Sciatic nerve (tissue), 2 donors: ENCODE measurements at regions of chr5 and their contacts with region 1.

Region 1: DNA sequence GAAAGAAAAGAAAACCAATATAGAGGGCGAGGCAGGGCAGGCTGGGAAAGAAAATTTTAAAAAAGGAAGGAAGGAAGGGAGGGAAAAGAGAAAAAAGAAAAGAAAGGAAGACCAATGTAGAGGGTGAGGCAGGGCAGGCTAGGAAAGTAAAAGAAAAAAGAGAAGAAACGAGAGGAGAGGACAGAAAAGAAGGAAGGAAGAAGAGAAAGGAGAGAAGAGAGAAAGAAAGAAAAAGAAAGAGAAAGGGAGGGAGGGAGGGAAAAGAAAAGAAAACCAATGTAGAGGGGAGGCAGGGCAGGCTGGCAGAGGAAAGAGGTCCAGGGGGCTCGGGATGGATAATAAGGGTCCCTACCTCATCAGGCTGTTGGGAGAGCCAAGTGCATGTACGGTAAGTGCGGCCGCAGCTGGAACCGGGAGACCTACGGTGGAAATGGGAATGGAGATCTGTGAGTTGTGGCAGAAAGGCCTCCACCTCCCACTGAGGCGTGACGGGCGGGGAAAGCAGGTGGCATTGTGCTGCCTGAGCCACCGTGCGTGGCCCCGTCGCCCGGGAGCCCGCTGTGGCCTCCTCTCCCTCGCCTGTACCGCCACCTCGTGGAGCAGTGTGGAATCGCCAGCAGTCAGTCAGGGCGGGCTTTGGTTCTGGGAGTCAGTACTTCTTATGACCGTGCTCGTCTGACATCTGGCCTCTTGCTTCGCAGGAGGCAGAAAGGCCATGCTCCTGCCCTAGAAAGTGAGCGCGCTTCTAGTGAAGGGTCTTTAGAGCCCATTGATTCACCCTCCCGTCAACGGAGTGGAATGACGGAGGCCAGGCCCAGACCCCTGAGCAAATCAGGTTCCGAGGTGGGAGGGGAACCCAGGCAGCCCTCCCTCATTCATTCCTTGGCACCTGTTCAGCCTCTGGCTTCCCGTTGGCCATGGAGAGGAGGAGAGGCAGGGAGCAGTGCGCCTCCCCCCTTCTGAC is 10.4 kb upstream of the NHP2 start:
- DNase-seq: peak; percentile 92
- ATAC-seq: peak; percentile 95

Region 2: GRCh38 chr5:178075840-178076548 is 88.1 kb before region 1 on chr5:
- intact Hi-C with region 1: loop called (anchors 5 kb)
- DNase-seq: peak; percentile 83
- ATAC-seq: peak; percentile 90

Region 3: GRCh38 chr5:178232124-178232919 is 68.3 kb after region 1 on chr5 and contains the start of gene PHYKPL:
- intact Hi-C with region 1: no loop called
- DNase-seq: peak; percentile 81
- ATAC-seq: peak; percentile 71
- total RNA-seq, gene PHYKPL: 133 TPM

Region 4: GRCh38 chr5:178818094-178818493 is 654.0 kb after region 1 on chr5:
- intact Hi-C with region 1: no loop called
- DNase-seq: no peak
- ATAC-seq: no peak